MCF 10A (cell line): ENCODE measurements at regions of chr12 and their contacts with region 1.

Region 1: GRCh38 chr12:115569345-115570068 is 708.0 kb downstream of the MED13L start:
- DNase-seq: no peak
- H3K4me3 Mint-ChIP-seq: no peak overlapping the region
- H3K27ac Mint-ChIP-seq: no peak overlapping the region
- H3K4me1 Mint-ChIP-seq: no peaks in the 10 kb centered on the region
- H3K27me3 Mint-ChIP-seq: no peaks in the 10 kb centered on the region
- CTCF ChIP-seq: no peak

Region 2: DNA sequence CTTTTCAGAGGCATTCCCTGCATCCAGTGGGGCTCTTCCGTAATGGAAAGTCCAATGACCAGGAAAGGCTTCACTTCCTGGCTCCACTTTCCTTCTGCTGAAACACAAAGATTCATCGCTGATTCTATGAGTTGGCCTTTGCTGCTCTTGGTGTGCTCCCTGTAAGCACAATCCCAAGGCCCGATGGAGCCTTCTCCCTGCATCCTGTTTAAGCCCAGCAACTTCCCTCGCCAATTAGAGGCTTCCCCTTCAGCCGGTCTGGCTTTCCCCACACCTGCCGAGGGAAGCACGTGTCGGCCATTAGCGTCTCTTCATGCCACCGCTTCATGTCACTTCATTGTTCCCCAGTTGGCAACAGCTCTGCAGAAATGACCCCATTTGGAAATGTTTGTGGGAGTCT is 14.1 kb after region 1 on chr12:
- CTCF ChIA-PET with region 1: no interaction called
- POLR2A ChIA-PET with region 1: no interaction called
- intact Hi-C with region 1: loop called (anchors 1 kb)
- DNase-seq: no peak
- H3K4me3 Mint-ChIP-seq: no peak overlapping the region
- H3K27ac Mint-ChIP-seq: no peak overlapping the region
- H3K4me1 Mint-ChIP-seq: no peaks in the 10 kb centered on the region
- H3K27me3 Mint-ChIP-seq: peaks cover 40% of the 10 kb centered on the region
- CTCF ChIP-seq: no peak